CD8-positive, alpha-beta T cell (primary cell): ENCODE measurements at regions of chr12 and their contacts with region 1.

Region 1: DNA sequence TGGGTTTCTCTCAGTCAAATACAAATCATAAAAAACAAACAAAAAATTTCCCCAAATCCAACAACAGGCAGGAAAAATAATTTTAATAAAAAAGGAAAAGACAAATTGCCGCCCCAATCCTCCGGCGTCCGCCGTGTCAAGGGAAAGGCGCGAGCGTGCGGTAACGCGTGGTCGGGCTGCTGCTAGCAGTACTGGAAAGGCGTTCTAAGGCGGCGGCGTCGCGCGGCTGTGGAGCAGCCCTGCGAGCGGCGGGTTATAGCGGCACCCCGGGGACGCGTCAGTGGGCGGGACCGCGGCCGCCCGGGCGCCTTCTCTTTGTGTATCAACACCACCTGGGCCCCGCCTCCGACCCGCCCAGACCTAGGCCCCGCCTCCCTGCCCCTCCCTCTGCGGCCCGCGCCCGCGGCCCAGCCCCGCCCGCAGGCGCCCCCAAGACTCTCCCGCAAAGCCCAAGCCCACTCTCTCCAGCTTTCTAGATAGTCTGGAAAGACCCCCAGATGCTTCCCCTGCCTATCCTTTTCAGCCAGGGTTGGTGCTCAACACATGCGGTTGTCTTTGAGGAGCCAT is at the start of gene SLC38A2:
- DNase-seq: peak; percentile 94 to 99 (median 97)
- ATAC-seq: peak; percentile 84
- H3K4me3 ChIP-seq: peak within 1 kb of the TSS; percentile 93 to 96
- H3K4me3 Mint-ChIP-seq: peak within 1 kb of the TSS; percentile 89
- H3K27ac ChIP-seq: peak within 1 kb of the TSS; percentile 88 to 93
- H3K27ac Mint-ChIP-seq: peak within 1 kb of the TSS; percentile 98
- H3K4me1 ChIP-seq: peaks cover 38% of the 10 kb centered on the region
- H3K4me1 Mint-ChIP-seq: peaks cover 50% of the 10 kb centered on the region
- H3K27me3 ChIP-seq: no peaks in the 10 kb centered on the region
- H3K27me3 Mint-ChIP-seq: no peaks in the 10 kb centered on the region
- CTCF ChIP-seq: no peak
- total RNA-seq, gene SLC38A2: 268 to 279 TPM

Region 2: DNA sequence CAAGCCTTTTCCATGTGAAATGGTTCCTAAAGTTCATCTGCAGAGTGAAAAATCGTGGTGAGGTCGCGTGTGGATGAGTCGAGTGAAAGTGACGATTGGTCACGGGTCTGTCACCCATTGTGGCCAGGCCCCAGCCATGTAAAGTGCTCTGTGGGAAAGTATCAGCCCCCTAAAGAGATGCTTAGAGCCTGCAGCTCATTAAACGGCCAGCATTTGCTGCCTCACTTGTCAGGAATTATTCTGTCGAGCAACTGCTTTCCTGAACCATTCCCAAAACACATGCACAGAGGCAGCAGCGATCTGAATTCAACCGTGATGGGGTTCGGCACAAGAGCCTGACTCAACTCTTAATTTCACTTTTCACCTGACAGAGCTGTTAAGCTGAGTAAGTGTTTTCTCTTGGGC is 1337.8 kb before region 1 on chr12:
- CTCF ChIA-PET with region 1: no interaction called
- POLR2A ChIA-PET with region 1: no interaction called
- intact Hi-C with region 1: no loop called
- DNase-seq: no peak
- ATAC-seq: no peak
- H3K4me3 ChIP-seq: no peak overlapping the region
- H3K4me3 Mint-ChIP-seq: no peak overlapping the region
- H3K27ac ChIP-seq: no peak overlapping the region
- H3K27ac Mint-ChIP-seq: no peak overlapping the region
- H3K4me1 ChIP-seq: no peaks in the 10 kb centered on the region
- H3K4me1 Mint-ChIP-seq: no peaks in the 10 kb centered on the region
- H3K27me3 ChIP-seq: no peaks in the 10 kb centered on the region
- H3K27me3 Mint-ChIP-seq: peaks cover 8% of the 10 kb centered on the region
- CTCF ChIP-seq: no peak

Region 3: GRCh38 chr12:45102818-45103217 is 1269.8 kb before region 1 on chr12:
- CTCF ChIA-PET with region 1: no interaction called
- POLR2A ChIA-PET with region 1: no interaction called
- intact Hi-C with region 1: no loop called
- DNase-seq: no peak
- ATAC-seq: no peak
- H3K4me3 ChIP-seq: no peak overlapping the region
- H3K4me3 Mint-ChIP-seq: no peak overlapping the region
- H3K27ac ChIP-seq: no peak overlapping the region
- H3K27ac Mint-ChIP-seq: no peak overlapping the region
- H3K4me1 ChIP-seq: no peaks in the 10 kb centered on the region
- H3K4me1 Mint-ChIP-seq: no peaks in the 10 kb centered on the region
- H3K27me3 ChIP-seq: peaks cover 0 to 3% of the 10 kb centered on the region in 2 experiments
- H3K27me3 Mint-ChIP-seq: peaks cover 12% of the 10 kb centered on the region
- CTCF ChIP-seq: no peak

Region 4: GRCh38 chr12:45728630-45729232 is 643.9 kb before region 1 on chr12:
- CTCF ChIA-PET with region 1: no interaction called
- POLR2A ChIA-PET with region 1: interaction called, 10 read pairs
- intact Hi-C with region 1: loop called (anchors 2 kb)
- DNase-seq: peak; percentile 93 to 98 (median 97)
- ATAC-seq: peak; percentile 76
- H3K4me3 ChIP-seq: peak overlapping the region; percentile 85 to 90
- H3K4me3 Mint-ChIP-seq: peak overlapping the region; percentile 96
- H3K27ac ChIP-seq: peak overlapping the region; percentile 90 to 96
- H3K27ac Mint-ChIP-seq: peak overlapping the region; percentile 97
- H3K4me1 ChIP-seq: peaks cover 20% of the 10 kb centered on the region
- H3K4me1 Mint-ChIP-seq: peaks cover 26% of the 10 kb centered on the region
- H3K27me3 ChIP-seq: no peaks in the 10 kb centered on the region
- H3K27me3 Mint-ChIP-seq: no peaks in the 10 kb centered on the region
- CTCF ChIP-seq: peak; percentile 90

Region 5: GRCh38 chr12:46268590-46269558 is 103.8 kb before region 1 on chr12 and contains the start of gene SLC38A1:
- CTCF ChIA-PET with region 1: no interaction called
- POLR2A ChIA-PET with region 1: interaction called, 31 read pairs
- intact Hi-C with region 1: loop called (anchors 1 kb)
- DNase-seq: peak; percentile 74 to 96 (median 91)
- ATAC-seq: peak; percentile 56
- H3K4me3 ChIP-seq: peak within 1 kb of the TSS; percentile 92 to 96
- H3K4me3 Mint-ChIP-seq: no peak within 1 kb of the TSS
- H3K27ac ChIP-seq: peak within 1 kb of the TSS; percentile 96 to 98
- H3K27ac Mint-ChIP-seq: no peak within 1 kb of the TSS
- H3K4me1 ChIP-seq: peaks cover 54% of the 10 kb centered on the region
- H3K4me1 Mint-ChIP-seq: peaks cover 41% of the 10 kb centered on the region
- H3K27me3 ChIP-seq: no peaks in the 10 kb centered on the region
- H3K27me3 Mint-ChIP-seq: no peaks in the 10 kb centered on the region
- CTCF ChIP-seq: no peak
- total RNA-seq, gene SLC38A1: 440 to 464 TPM

Region 6: GRCh38 chr12:46342562-46343033 is 30.0 kb before region 1 on chr12:
- CTCF ChIA-PET with region 1: no interaction called
- POLR2A ChIA-PET with region 1: no interaction called
- intact Hi-C with region 1: no loop called
- DNase-seq: peak in 8 of 9 experiments; percentile 6 to 69 (median 38)
- ATAC-seq: peak; percentile 67
- H3K4me3 ChIP-seq: no peak overlapping the region
- H3K4me3 Mint-ChIP-seq: no peak overlapping the region
- H3K27ac ChIP-seq: no peak overlapping the region
- H3K27ac Mint-ChIP-seq: no peak overlapping the region
- H3K4me1 ChIP-seq: no peaks in the 10 kb centered on the region
- H3K4me1 Mint-ChIP-seq: no peaks in the 10 kb centered on the region
- H3K27me3 ChIP-seq: no peaks in the 10 kb centered on the region
- H3K27me3 Mint-ChIP-seq: peaks cover 2% of the 10 kb centered on the region
- CTCF ChIP-seq: peak; percentile 62

Region 7: DNA sequence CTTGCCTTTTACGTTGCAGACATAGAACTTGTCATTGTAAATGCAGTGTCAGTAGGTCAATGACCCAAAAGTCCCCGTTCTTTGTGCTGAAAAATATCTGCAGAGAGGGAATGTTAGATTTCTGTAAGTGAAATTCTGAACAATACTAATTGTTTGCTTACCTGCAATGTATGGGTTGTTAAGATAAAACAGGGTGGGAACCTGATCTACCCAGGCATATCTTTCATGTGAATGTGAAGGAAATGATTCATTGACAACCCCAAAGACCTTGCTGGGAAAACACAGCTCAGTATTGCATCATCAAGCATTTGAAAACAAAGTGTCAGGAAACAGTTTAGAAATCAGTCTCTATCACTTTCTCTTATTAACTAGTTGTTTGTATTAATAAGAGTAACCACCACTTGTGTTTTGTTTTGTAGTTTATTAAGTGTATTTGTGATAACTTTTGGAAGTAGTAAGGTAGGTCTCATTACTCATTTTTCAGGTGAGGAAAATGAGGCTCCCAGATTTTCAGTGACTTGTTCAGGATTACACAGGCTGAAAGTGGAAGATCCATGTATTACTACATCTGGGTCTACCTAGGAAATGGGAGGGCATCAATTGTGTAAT is 57.8 kb after region 1 on chr12:
- CTCF ChIA-PET with region 1: no interaction called
- POLR2A ChIA-PET with region 1: no interaction called
- intact Hi-C with region 1: loop called in 1 of 2 experiments (anchors 2 kb)
- DNase-seq: peak in 2 of 9 experiments; percentile 33 to 60
- ATAC-seq: peak; percentile 80
- H3K4me3 ChIP-seq: no peak overlapping the region
- H3K4me3 Mint-ChIP-seq: no peak overlapping the region
- H3K27ac ChIP-seq: no peak overlapping the region
- H3K27ac Mint-ChIP-seq: peak overlapping the region; percentile 55
- H3K4me1 ChIP-seq: peaks cover 7% of the 10 kb centered on the region
- H3K4me1 Mint-ChIP-seq: peaks cover 9% of the 10 kb centered on the region
- H3K27me3 ChIP-seq: no peaks in the 10 kb centered on the region
- H3K27me3 Mint-ChIP-seq: no peaks in the 10 kb centered on the region
- CTCF ChIP-seq: no peak

Region 8: DNA sequence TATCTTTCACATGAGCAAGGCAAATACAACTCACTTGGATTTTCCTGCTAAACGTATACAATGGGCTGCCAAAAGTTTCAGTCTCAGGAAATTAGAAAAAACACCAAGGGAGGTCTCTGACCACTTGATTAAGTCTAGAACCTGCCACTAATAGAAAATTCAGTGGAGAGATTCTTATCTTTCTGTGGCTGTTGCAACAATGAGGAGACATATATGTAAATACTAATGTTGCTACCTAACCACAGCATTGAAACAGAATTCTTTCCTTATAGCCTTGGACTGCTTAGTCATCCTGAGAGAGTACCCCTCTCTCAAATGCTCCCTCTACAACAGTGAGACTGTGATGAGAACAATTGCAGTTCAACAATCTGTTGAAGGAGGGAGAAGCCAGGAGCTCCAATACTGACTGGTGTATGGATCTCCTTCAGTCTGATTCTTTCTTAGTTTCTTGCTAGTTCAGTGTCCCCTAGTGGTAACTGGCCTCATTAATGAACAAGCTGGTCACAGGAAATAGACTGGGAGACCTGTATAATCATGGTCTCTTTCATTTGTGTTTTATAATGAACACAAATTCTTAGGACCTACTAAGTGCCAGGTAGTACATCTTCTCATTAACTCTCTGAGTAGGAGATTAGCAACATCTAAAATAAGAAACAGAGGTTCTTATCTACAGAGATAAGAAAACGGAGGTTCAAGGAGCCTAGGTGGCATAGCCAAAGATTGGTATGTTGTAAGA is 288.7 kb after region 1 on chr12:
- CTCF ChIA-PET with region 1: interaction called, 9 read pairs
- POLR2A ChIA-PET with region 1: interaction called, 3 read pairs
- intact Hi-C with region 1: loop called in 1 of 2 experiments (anchors 2 kb)
- DNase-seq: peak in 2 of 9 experiments; percentile 60 to 72
- ATAC-seq: peak; percentile 69
- H3K4me3 ChIP-seq: no peak overlapping the region
- H3K4me3 Mint-ChIP-seq: no peak overlapping the region
- H3K27ac ChIP-seq: no peak overlapping the region
- H3K27ac Mint-ChIP-seq: no peak overlapping the region
- H3K4me1 ChIP-seq: peaks cover 6% of the 10 kb centered on the region
- H3K4me1 Mint-ChIP-seq: peaks cover 28% of the 10 kb centered on the region
- H3K27me3 ChIP-seq: no peaks in the 10 kb centered on the region
- H3K27me3 Mint-ChIP-seq: no peaks in the 10 kb centered on the region
- CTCF ChIP-seq: peak; percentile 61

Region 9: DNA sequence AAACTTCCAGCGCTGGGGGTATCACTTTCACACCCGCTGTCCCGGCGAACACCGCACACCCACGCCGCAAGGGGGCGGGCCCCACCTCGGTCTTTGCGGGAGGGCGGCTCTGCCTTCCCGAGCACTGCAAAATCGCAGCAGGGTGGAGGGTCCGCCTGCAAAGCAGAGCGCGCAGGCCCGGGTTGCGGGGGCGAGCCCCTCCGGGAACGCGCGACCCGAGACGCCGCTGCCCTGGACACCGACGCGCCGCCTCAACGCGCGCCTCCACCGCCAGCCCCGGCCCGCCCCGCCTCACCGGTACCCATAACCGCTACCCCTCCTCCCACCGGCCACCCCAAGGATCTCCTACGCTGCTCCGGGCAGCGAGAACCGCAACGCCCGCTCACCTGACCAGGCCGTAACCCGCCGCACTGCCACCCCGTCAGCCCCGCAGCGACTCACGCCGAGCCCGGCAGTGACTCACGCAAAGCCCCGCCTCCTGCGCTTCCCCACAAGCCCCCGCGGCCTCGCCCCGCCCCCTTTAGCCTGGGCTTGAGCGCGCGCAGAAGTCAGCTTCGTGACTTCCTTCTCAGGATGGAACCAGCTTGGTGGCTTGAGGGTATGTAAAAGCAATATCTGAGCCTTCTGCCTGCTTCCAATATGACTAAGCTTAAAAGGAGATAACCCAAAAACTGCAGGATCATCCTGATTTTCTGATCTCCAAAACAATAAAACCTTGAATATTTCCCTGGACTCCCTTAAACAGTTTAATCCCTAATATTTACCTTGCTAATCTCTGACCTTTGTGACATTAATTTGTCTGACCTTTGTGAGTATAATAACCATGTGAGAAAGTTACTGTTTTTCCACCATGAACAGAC is 1333.2 kb after region 1 on chr12 and contains the start of gene RPAP3:
- CTCF ChIA-PET with region 1: no interaction called
- POLR2A ChIA-PET with region 1: no interaction called
- intact Hi-C with region 1: loop called in 1 of 2 experiments (anchors 10 kb)
- DNase-seq: peak; percentile 92 to 98 (median 97)
- ATAC-seq: peak; percentile 95
- H3K4me3 ChIP-seq: peak within 1 kb of the TSS; percentile 63 to 73
- H3K4me3 Mint-ChIP-seq: peak within 1 kb of the TSS; percentile 91
- H3K27ac ChIP-seq: peak within 1 kb of the TSS; percentile 67 to 88
- H3K27ac Mint-ChIP-seq: peak within 1 kb of the TSS; percentile 96
- H3K4me1 ChIP-seq: peaks cover 48% of the 10 kb centered on the region
- H3K4me1 Mint-ChIP-seq: peaks cover 64% of the 10 kb centered on the region
- H3K27me3 ChIP-seq: no peaks in the 10 kb centered on the region
- H3K27me3 Mint-ChIP-seq: no peaks in the 10 kb centered on the region
- CTCF ChIP-seq: peak; percentile 77
- total RNA-seq, gene RPAP3: 17.3 to 18.3 TPM